Right cardiac atrium (tissue), 5 donors: ENCODE measurements at regions of chr17 and their contacts with region 1.

Region 1: DNA sequence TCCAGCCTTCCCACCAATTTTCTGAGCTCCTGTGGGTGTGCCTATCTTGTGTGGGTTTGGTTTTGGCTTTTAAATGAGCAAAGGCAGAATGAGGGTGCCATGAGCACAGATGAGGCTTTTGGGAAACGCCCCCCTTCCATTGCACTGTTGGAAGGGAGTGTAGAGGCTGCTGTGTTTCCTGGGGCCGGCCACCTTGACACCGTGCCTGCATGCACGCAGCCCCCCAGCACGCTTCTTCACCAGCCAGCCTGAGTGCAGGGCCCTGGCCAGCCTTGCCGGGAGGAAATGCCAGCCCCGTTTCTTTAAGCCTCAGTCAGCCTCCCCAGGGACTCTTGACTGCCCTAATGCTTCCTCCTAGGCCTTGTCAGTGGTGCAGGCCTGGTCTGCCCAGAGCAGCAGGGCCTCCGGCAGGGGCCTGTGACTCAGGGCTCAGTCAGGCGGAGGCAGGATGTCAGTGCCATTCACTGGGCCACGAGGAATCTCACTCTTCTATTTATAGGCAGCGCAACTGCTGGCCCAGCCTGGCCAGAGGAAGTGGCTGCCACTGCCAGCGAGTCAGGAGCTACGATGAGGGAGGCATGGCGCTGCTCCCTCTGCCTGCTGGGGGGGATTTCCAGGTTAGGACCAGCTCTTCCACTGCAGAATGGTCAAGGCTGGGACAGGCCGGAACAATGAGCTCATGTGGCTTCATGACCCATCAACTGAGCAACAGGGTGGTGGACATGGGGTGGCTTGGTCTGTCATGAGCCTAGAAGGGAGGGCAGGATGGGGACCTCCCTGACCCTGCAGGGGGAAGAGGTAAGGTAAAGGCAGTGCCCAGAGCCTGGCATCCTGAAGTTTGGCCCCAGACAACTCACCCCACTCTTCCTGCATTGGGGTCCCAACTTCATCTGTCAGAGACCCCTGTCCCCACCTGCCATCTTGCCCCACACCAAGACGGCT is 205.2 kb downstream of the RAB11FIP4 start:
- DNase-seq: peak; percentile 78 to 87 (median 87)
- ATAC-seq: peak; percentile 92 to 95
- H3K4me3 ChIP-seq: no peak overlapping the region
- H3K27ac ChIP-seq: peak overlapping the region; percentile 87
- H3K4me1 ChIP-seq: peaks cover 8% of the 10 kb centered on the region
- H3K27me3 ChIP-seq: no peaks in the 10 kb centered on the region

Region 2: GRCh38 chr17:31654936-31655335 is 58.3 kb after region 1 on chr17:
- intact Hi-C with region 1: loop called in 1 of 4 experiments (anchors 5 kb)
- DNase-seq: peak; percentile 57 to 79 (median 77)
- ATAC-seq: peak; percentile 96 to 97
- H3K4me3 ChIP-seq: no peak overlapping the region
- H3K27ac ChIP-seq: peak overlapping the region; percentile 77
- H3K4me1 ChIP-seq: no peaks in the 10 kb centered on the region
- H3K27me3 ChIP-seq: no peaks in the 10 kb centered on the region